ENCODE measurements at regions of chrX and their contacts with region 1.

Region 1: GRCh38 chrX:13750204-13750603 is 15.7 kb downstream of the OFD1 start:
- DNase-seq: no peak
- ATAC-seq: peak in 1 of 2 donors; percentile 41
- H3K4me3 ChIP-seq: no peak overlapping the region
- H3K27ac ChIP-seq: no peak overlapping the region
- H3K4me1 ChIP-seq: no peaks in the 10 kb centered on the region
- H3K27me3 ChIP-seq: no peaks in the 10 kb centered on the region

Region 2: GRCh38 chrX:13658602-13659001 is 91.6 kb before region 1 on chrX:
- intact Hi-C with region 1: loop called in 3 of 4 experiments (anchors 5 kb)
- DNase-seq: no peak
- ATAC-seq: no peak
- H3K4me3 ChIP-seq: no peak overlapping the region
- H3K27ac ChIP-seq: no peak overlapping the region
- H3K4me1 ChIP-seq: no peaks in the 10 kb centered on the region
- H3K27me3 ChIP-seq: no peaks in the 10 kb centered on the region

Region 3: DNA sequence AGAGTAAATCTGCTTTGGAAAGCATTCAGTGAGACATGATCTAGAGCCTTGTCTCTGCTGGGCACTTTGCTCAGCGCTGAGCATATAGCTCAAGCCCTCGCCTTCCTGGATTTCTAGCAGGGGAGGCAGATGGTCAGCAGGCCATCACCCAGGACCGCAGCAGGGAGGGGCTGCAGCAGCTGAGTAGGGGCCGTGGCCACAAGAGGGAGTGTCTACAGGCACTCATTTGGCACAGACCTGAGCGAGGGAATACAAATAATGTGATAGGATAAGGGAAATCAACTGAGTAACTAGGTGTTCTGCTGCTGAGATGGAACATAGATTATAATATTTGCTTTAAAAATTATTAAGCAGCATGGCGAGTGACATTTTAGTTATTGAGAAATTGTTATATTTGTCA is 14.6 kb after region 1 on chrX:
- intact Hi-C with region 1: no loop called
- DNase-seq: peak; percentile 21 to 73 (median 63)
- ATAC-seq: peak; percentile 67 to 71
- H3K4me3 ChIP-seq: no peak overlapping the region
- H3K27ac ChIP-seq: no peak overlapping the region
- H3K4me1 ChIP-seq: peaks cover 3% of the 10 kb centered on the region
- H3K27me3 ChIP-seq: no peaks in the 10 kb centered on the region

Region 4: GRCh38 chrX:13876652-13877051 is 126.4 kb after region 1 on chrX:
- intact Hi-C with region 1: no loop called
- DNase-seq: no peak
- ATAC-seq: peak in 1 of 2 donors; percentile 46
- H3K4me3 ChIP-seq: no peak overlapping the region
- H3K27ac ChIP-seq: no peak overlapping the region
- H3K4me1 ChIP-seq: no peaks in the 10 kb centered on the region
- H3K27me3 ChIP-seq: no peaks in the 10 kb centered on the region